PC-9 (cell line): ENCODE measurements at regions of chr19 and their contacts with region 1.

Region 1: GRCh38 chr19:16714702-16715287 is 4.9 kb upstream of the NWD1 start:
- DNase-seq: peak; percentile 43 to 57
- H3K4me3 ChIP-seq: no peak overlapping the region
- H3K27ac ChIP-seq: no peak overlapping the region
- H3K4me1 ChIP-seq: peaks cover 24% of the 10 kb centered on the region
- H3K27me3 ChIP-seq: no peaks in the 10 kb centered on the region
- CTCF ChIP-seq: peak; percentile 100

Region 2: DNA sequence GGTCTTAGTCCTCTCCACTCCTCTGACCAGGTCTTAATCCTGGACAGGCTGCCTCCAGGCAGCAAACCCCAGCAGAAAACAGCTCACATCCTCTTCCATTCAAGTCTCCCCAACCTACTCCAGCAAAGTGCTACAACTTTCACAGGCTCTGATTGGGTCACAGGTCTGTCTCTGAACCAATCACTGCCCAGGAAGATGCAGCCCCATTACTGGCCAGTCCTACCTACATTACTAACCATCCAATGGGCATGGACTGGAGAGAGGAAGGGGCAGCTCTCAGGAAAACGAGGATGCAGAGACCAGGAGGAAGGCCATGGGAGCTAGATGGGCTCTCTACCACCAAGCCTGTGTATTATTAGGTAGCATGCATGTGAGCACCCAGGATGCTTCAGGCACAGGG is 99.0 kb before region 1 on chr19:
- CTCF ChIA-PET with region 1: no interaction called
- POLR2A ChIA-PET with region 1: no interaction called
- intact Hi-C with region 1: no loop called
- DNase-seq: no peak
- H3K4me3 ChIP-seq: no peak overlapping the region
- H3K27ac ChIP-seq: no peak overlapping the region
- H3K4me1 ChIP-seq: peaks cover 22% of the 10 kb centered on the region
- H3K27me3 ChIP-seq: no peaks in the 10 kb centered on the region
- CTCF ChIP-seq: no peak

Region 3: GRCh38 chr19:16671652-16672274 is 43.0 kb before region 1 on chr19:
- CTCF ChIA-PET with region 1: interaction called, 12 read pairs
- POLR2A ChIA-PET with region 1: interaction called, 7 read pairs
- intact Hi-C with region 1: no loop called
- DNase-seq: no peak
- H3K4me3 ChIP-seq: no peak overlapping the region
- H3K27ac ChIP-seq: no peak overlapping the region
- H3K4me1 ChIP-seq: peaks cover 2% of the 10 kb centered on the region; the same call in 1 of the 2 replicates
- H3K27me3 ChIP-seq: no peaks in the 10 kb centered on the region
- CTCF ChIP-seq: no peak

Region 4: GRCh38 chr19:16726916-16727315 is 12.1 kb after region 1 on chr19:
- CTCF ChIA-PET with region 1: interaction called, 14 read pairs
- POLR2A ChIA-PET with region 1: no interaction called
- intact Hi-C with region 1: no loop called
- DNase-seq: no peak
- H3K4me3 ChIP-seq: no peak overlapping the region
- H3K27ac ChIP-seq: no peak overlapping the region
- H3K4me1 ChIP-seq: no peaks in the 10 kb centered on the region
- H3K27me3 ChIP-seq: no peaks in the 10 kb centered on the region
- CTCF ChIP-seq: no peak

Region 5: GRCh38 chr19:16814526-16815100 is 99.8 kb after region 1 on chr19:
- CTCF ChIA-PET with region 1: no interaction called
- POLR2A ChIA-PET with region 1: no interaction called
- intact Hi-C with region 1: no loop called
- DNase-seq: no peak
- H3K4me3 ChIP-seq: no peak overlapping the region
- H3K27ac ChIP-seq: no peak overlapping the region
- H3K4me1 ChIP-seq: peaks cover 26% of the 10 kb centered on the region
- H3K27me3 ChIP-seq: no peaks in the 10 kb centered on the region
- CTCF ChIP-seq: no peak

Region 6: GRCh38 chr19:16829010-16829821 is 114.4 kb after region 1 on chr19 and contains the start of gene SIN3B:
- CTCF ChIA-PET with region 1: no interaction called
- POLR2A ChIA-PET with region 1: no interaction called
- intact Hi-C with region 1: loop called (anchors 5 kb)
- DNase-seq: peak; percentile 86 to 88
- H3K4me3 ChIP-seq: peak within 1 kb of the TSS; percentile 94
- H3K27ac ChIP-seq: 0 out of 2 replicates have a peak within 1 kb of the TSS, but pooled peaks have one; percentile 3
- H3K4me1 ChIP-seq: peaks cover 25% of the 10 kb centered on the region
- H3K27me3 ChIP-seq: no peaks in the 10 kb centered on the region
- CTCF ChIP-seq: no peak
- total RNA-seq, gene SIN3B: 72.6 and 83.8 TPM in 2 replicates